ENCODE measurements at regions of chr19 and their contacts with region 1.

Region 1: GRCh38 chr19:48582168-48582567 is 24.4 kb upstream of the SPACA4 start:
- DNase-seq: no peak
- ATAC-seq: no peak

Region 2: GRCh38 chr19:48506138-48506733 is 75.9 kb before region 1 on chr19:
- intact Hi-C with region 1: loop called (anchors 5 kb)
- DNase-seq: no peak
- ATAC-seq: no peak